Prostate gland (tissue), 2 donors: ENCODE measurements at regions of chr10 and their contacts with region 1.

Region 1: DNA sequence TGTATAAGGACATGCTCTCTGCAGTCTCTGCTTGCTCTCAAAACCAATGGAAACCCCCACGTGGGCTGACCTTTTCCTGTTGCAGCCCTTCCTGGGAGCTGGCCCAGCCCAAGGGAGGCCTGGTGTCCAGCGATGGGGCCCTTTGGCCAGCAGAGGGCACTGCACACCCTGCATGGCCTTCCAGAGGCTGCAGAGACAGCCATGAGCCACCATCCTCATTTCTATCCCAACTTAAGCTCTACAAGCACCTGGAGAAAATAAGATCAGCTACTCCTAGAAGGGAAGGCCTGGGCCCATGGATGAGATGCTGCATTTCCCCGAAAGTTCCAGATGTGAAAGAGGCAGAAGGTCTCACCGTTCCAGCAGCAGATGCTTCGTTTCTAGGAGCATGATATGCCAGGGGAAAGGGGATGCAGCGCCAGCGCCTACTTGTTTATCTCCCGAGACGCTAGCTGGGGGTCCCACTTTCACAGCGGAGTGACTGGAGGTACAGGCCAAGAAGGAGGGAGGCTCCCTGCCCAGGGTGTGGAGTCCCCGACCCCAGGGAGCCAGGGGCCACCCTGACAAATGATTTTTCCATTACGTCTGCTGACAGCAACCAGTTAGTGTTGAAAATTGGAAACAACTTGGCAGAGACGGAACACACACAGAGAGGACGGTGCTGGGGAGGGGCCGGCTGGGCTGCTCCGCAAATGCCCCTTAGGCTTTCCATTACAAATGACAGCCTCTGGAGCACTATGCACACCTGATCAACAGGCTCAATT is 106.4 kb downstream of the ZRANB1 start:
- DNase-seq: peak; percentile 81
- H3K4me3 ChIP-seq: no peak overlapping the region
- H3K27ac ChIP-seq: peak overlapping the region; percentile 28 to 65
- H3K4me1 ChIP-seq: peaks cover 17% of the 10 kb centered on the region
- H3K27me3 ChIP-seq: no peaks in the 10 kb centered on the region
- CTCF ChIP-seq: peak; percentile 82 to 94 (median 94)
- POLR2A ChIP-seq: no peak

Region 2: GRCh38 chr10:124983255-124983705 is 65.0 kb before region 1 on chr10:
- intact Hi-C with region 1: no loop called
- DNase-seq: no peak
- H3K4me3 ChIP-seq: no peak overlapping the region
- H3K27ac ChIP-seq: peak overlapping the region in 1 of 2 donors; percentile 11
- H3K4me1 ChIP-seq: no peaks in the 10 kb centered on the region
- H3K27me3 ChIP-seq: no peaks in the 10 kb centered on the region
- CTCF ChIP-seq: no peak
- POLR2A ChIP-seq: no peak

Region 3: GRCh38 chr10:125000366-125001312 is 47.6 kb before region 1 on chr10:
- intact Hi-C with region 1: loop called (anchors 5 kb)
- DNase-seq: peak; percentile 64
- H3K4me3 ChIP-seq: no peak overlapping the region
- H3K27ac ChIP-seq: peak overlapping the region; percentile 72 to 73
- H3K4me1 ChIP-seq: peaks cover 30% of the 10 kb centered on the region
- H3K27me3 ChIP-seq: no peaks in the 10 kb centered on the region
- CTCF ChIP-seq: peak in 3 of 4 experiments; percentile 15 to 25 (median 17)
- POLR2A ChIP-seq: no peak

Region 4: GRCh38 chr10:125343118-125343925 is 295.0 kb after region 1 on chr10:
- intact Hi-C with region 1: loop called (anchors 5 kb)
- DNase-seq: no peak
- H3K4me3 ChIP-seq: no peak overlapping the region
- H3K27ac ChIP-seq: no peak overlapping the region
- H3K4me1 ChIP-seq: no peaks in the 10 kb centered on the region
- H3K27me3 ChIP-seq: no peaks in the 10 kb centered on the region
- CTCF ChIP-seq: peak in 2 of 4 experiments; percentile 21 to 31
- POLR2A ChIP-seq: no peak

Region 5: GRCh38 chr10:125629763-125630376 is 581.6 kb after region 1 on chr10:
- intact Hi-C with region 1: loop called (anchors 10 kb)
- DNase-seq: no peak
- H3K4me3 ChIP-seq: no peak overlapping the region
- H3K27ac ChIP-seq: no peak overlapping the region
- H3K4me1 ChIP-seq: no peaks in the 10 kb centered on the region
- H3K27me3 ChIP-seq: no peaks in the 10 kb centered on the region
- CTCF ChIP-seq: peak in 3 of 4 experiments; percentile 18 to 60 (median 39)
- POLR2A ChIP-seq: no peak